Activated CD4-positive, alpha-beta T cell treated with anti-CD3 and anti-CD28 coated beads, Interleukin-2, amount 10 ng/mL, durations not matched to agents 24 days and 14 days (primary cell): ENCODE measurements at regions of chr6 and their contacts with region 1.

Region 1: DNA sequence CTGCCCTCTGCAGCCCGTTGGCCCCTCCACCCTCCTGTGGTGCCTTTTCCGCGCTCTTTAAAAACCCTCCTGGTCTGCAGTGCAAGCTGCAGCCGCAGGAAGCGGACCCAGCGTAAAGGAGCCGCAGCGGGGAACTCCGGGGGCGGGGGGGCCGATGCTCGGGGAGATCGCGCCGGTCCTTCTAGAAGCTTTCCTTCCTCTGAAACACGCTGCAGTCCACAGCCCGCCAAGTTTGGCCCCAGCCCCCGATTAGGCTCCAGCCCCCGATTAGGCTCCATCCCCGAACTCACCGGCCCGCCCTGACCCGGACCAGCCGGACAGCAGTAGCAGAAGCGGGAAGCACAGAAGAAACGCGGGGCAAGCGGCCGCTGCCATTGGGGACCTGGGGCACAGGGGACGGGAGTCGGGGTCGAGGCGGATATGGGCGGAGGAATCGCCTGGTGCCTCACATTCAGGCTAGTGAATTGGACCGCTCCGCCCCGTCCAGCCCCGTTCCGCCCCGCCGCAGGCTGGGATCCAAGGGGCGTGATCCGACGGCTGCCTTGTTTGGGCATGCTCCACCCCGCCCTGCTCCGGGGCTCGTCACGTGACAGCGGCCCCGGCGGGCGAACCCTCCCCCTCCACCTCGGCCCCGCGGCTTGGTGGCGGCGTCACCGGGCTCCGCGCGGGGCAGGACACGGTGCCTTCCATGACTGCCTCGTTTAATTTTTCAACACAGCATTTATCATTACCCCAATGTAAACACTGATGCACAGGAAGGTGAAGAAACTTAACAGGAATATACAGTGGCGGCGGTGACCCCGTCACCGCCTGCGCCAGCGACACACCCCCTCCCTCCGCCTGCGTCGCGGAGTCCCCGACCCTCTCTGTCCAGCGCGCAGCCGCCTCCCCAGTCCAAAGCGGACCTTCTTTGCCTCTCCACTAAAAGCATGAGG is 20.3 kb downstream of the RAET1L start:
- DNase-seq: peak; percentile 99
- H3K4me3 Mint-ChIP-seq: peak overlapping the region; percentile 90
- H3K27ac Mint-ChIP-seq: peak overlapping the region; percentile 88
- H3K4me1 Mint-ChIP-seq: peaks cover 56% of the 10 kb centered on the region
- H3K27me3 Mint-ChIP-seq: peaks cover 22% of the 10 kb centered on the region

Region 2: GRCh38 chr6:148885136-148885870 is 1119.7 kb before region 1 on chr6:
- intact Hi-C with region 1: no loop called
- DNase-seq: no peak
- H3K4me3 Mint-ChIP-seq: no peak overlapping the region
- H3K27ac Mint-ChIP-seq: no peak overlapping the region
- H3K4me1 Mint-ChIP-seq: no peaks in the 10 kb centered on the region
- H3K27me3 Mint-ChIP-seq: no peaks in the 10 kb centered on the region

Region 3: GRCh38 chr6:149545754-149546528 is 459.1 kb before region 1 on chr6 and contains the start of gene PPIL4:
- intact Hi-C with region 1: loop called (anchors 10 kb)
- DNase-seq: peak; percentile 99
- H3K4me3 Mint-ChIP-seq: peak within 1 kb of the TSS; percentile 94
- H3K27ac Mint-ChIP-seq: peak within 1 kb of the TSS; percentile 98
- H3K4me1 Mint-ChIP-seq: peaks cover 22% of the 10 kb centered on the region
- H3K27me3 Mint-ChIP-seq: peaks cover 10% of the 10 kb centered on the region
- total RNA-seq, gene PPIL4: 24.2 and 28.4 TPM in 2 replicates

Region 4: DNA sequence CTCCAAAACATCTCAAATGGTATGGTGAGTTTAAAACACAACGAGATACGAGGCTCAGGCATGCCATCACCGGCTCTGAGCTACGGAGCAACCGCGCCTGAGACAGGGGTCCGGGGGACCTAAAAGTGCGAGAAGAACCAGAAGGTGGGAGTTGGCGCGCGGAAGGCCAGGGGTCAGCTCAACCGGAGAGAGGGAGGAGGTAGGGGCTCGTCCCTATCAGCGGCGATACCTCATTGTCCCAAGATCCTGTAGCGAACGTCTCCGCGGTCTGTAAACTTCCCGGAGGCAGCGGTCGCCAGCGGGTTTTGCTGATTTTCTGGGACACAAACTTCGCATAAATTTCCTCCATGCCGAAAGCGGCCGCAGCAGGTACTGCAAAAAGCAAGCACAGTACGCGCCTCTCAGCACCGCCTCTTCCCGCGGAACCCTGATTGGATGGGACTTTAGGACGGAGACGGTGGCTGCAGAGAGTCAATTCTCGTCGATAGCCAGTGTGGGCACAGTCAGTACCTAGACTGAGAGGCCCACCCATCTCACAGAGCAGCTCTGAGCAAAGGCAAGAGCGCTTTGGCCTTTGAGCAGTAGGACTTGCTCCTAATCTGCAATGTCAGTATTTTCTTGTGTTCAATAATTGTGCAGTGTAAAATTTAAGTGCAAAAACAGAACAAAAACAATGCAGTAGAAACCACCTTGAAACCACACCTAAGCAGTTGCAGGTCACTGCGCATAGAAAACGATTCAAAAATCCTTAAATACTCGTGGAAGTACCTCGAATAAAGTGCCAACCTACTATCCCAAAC is 258.7 kb before region 1 on chr6 and contains the start of gene NUP43:
- intact Hi-C with region 1: loop called (anchors 10 kb)
- DNase-seq: peak; percentile 98
- H3K4me3 Mint-ChIP-seq: peak within 1 kb of the TSS; percentile 99
- H3K27ac Mint-ChIP-seq: peak within 1 kb of the TSS; percentile 94
- H3K4me1 Mint-ChIP-seq: peaks cover 20% of the 10 kb centered on the region
- H3K27me3 Mint-ChIP-seq: no peaks in the 10 kb centered on the region
- total RNA-seq, gene NUP43: 78.9 and 93.7 TPM in 2 replicates

Region 5: GRCh38 chr6:149963462-149964307 is 41.4 kb before region 1 on chr6 and contains the start of gene ULBP1:
- intact Hi-C with region 1: loop called (anchors 1 kb)
- DNase-seq: peak; percentile 96
- H3K4me3 Mint-ChIP-seq: peak within 1 kb of the TSS; percentile 95
- H3K27ac Mint-ChIP-seq: peak within 1 kb of the TSS; percentile 89
- H3K4me1 Mint-ChIP-seq: peaks cover 36% of the 10 kb centered on the region
- H3K27me3 Mint-ChIP-seq: peaks cover 74% of the 10 kb centered on the region
- total RNA-seq, gene ULBP1: 0.49 and 0.76 TPM in 2 replicates

Region 6: DNA sequence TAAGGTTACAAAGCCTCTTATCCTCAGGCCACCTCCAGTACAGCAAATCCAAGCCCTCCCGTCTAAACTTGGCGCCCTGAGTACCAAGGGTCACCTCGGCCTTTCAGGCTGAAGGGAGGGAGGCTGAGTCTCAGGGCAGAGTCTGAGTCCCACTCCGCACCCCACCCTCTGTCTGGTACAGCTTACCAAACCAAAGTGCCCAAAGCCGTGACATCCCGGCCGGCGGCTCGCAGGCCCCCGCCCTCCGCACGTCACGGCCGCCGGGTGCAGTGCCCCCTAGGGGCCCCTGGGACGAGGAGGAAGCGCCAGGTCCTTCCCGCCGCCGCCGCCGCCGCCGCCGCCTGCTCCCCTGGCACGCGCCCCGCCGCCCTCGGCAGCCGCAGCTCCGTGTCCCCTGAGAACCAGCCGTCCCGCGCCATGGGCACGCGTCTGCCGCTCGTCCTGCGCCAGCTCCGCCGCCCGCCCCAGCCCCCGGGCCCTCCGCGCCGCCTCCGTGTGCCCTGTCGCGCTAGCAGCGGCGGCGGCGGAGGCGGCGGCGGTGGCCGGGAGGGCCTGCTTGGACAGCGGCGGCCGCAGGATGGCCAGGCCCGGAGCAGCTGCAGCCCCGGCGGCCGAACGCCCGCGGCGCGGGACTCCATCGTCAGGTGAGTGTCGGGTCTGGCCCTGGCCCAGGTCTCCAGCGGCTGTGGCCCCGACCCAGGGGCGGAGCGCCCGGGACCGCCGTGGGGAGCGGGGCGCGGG is 860.5 kb after region 1 on chr6 and contains the start of gene MTHFD1L:
- intact Hi-C with region 1: loop called (anchors 5 kb)
- DNase-seq: peak; percentile 94
- H3K4me3 Mint-ChIP-seq: peak within 1 kb of the TSS; percentile 98
- H3K27ac Mint-ChIP-seq: peak within 1 kb of the TSS; percentile 93
- H3K4me1 Mint-ChIP-seq: peaks cover 29% of the 10 kb centered on the region
- H3K27me3 Mint-ChIP-seq: peaks cover 10% of the 10 kb centered on the region
- total RNA-seq, gene MTHFD1L: 136 and 137 TPM in 2 replicates